Posterior vena cava (tissue), 2 donors: ENCODE measurements at regions of chr7 and their contacts with region 1.

Region 1: DNA sequence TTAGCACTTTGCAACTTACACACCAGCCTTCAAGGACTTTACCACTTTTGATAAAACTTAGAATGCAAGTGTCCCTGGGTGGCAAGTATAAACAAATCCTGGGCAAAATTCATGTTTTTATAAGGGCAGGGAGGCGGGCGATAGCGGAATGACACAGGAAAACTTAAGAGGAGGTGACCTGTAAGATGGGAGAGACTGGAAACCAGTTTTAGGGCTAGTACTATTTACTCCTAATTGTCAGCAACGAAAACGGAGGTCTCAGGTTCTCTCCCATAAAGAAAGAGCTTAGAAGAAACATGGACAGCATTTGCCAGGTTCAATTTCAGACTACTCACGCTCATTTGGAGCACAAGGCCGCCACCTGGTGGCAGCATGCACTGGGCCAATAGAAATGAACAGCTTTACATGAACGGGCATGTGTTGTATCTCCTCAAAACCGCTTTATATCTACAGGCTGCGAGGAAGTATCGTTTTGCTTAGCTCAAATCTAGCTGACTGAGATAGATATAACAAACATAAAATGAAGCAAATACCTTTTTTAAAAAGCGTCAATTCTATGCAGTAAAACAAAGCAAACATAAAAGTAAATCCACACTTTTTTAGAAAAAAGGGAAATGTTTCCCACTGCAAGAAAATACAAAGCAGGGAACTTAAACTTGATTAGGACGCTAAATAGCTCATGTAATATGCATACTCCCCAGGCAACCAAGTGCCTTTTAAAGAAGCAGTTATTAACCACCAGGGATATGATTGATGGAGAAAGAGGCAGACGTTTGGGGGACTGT is 37.6 kb upstream of the SVOPL start:
- DNase-seq: peak; percentile 93

Region 2: GRCh38 chr7:136890399-136890798 is 1848.3 kb before region 1 on chr7:
- intact Hi-C with region 1: loop called in 1 of 2 experiments (anchors 5 kb)
- DNase-seq: no peak

Region 3: GRCh38 chr7:138698281-138698680 is 40.5 kb before region 1 on chr7:
- intact Hi-C with region 1: loop called in 1 of 2 experiments (anchors 1 kb)
- DNase-seq: peak; percentile 28